ENCODE measurements at regions of chr5 and their contacts with region 1.

Region 1: DNA sequence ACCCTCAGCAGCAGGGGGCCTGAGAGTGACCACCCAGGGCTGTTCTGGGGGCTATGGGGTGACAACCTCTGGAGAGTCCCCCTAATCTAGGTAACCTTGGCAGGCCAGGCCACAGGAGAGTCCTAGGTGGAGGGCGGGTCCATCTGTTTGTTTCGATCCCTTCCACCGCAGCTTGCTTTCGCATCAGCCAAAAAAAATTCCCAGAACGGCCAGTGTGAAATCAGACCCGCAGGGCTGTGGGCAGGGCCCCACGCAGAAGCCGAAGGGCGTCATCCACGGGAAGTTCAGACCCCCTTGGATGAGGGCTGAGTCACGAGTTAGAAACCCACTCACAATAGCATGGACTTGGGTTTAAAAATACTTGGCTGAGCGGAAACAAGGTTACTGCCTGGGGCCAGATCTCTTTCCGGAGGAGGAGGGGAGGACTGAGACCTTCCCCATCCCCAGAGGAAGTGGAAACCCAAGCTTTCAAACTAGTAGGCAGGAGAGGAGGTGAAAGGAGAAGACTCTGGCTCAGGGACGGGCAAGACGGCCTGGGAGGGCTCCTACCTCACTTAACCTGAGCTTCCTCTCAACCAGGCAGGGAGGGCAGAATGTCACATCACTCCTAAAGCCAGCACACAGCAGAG is 8.5 kb downstream of the STK10 start:
- DNase-seq: peak in 8 of 9 experiments; percentile 36 to 86 (median 58)
- ATAC-seq: peak; percentile 9
- H3K4me3 ChIP-seq: peak overlapping the region; percentile 49 to 51
- H3K4me3 Mint-ChIP-seq: peak overlapping the region; percentile 80
- H3K27ac ChIP-seq: peak overlapping the region; percentile 92 to 97
- H3K27ac Mint-ChIP-seq: peak overlapping the region; percentile 97
- H3K4me1 ChIP-seq: peaks cover 90% of the 10 kb centered on the region
- H3K4me1 Mint-ChIP-seq: peaks cover 89% of the 10 kb centered on the region
- H3K27me3 ChIP-seq: no peaks in the 10 kb centered on the region
- H3K27me3 Mint-ChIP-seq: no peaks in the 10 kb centered on the region
- CTCF ChIP-seq: no peak

Region 2: GRCh38 chr5:172065501-172065990 is 113.9 kb before region 1 on chr5:
- CTCF ChIA-PET with region 1: interaction called, 4 read pairs
- POLR2A ChIA-PET with region 1: interaction called, 15 read pairs
- intact Hi-C with region 1: loop called in 1 of 2 experiments (anchors 2 kb)
- DNase-seq: no peak
- ATAC-seq: no peak
- H3K4me3 ChIP-seq: peak overlapping the region in 1 of 2 experiments; percentile 6
- H3K4me3 Mint-ChIP-seq: peak overlapping the region; percentile 15
- H3K27ac ChIP-seq: peak overlapping the region; percentile 34 to 67
- H3K27ac Mint-ChIP-seq: peak overlapping the region; percentile 98
- H3K4me1 ChIP-seq: peaks cover 57% of the 10 kb centered on the region
- H3K4me1 Mint-ChIP-seq: peaks cover 72% of the 10 kb centered on the region
- H3K27me3 ChIP-seq: no peaks in the 10 kb centered on the region
- H3K27me3 Mint-ChIP-seq: no peaks in the 10 kb centered on the region
- CTCF ChIP-seq: no peak

Region 3: DNA sequence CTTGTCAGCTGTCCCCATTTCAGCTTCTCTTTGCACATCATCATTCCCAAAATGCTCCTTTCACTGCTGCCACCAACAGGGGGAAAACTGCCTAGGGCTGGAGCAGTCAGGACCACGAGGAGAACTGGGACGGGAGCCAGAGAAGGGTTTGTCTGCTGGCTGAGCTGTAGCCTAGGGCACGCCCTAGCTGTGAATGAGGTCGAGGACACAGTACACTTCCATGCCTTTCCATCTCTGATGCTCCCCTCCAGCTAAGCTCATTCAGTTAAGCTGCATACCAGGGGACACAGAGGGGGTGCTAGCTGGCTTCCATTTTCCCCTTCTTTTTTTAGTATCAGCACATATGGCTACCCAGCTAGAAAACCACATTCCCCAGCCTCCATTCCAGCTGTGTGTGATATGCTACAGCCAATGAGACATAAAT is 56.2 kb before region 1 on chr5:
- CTCF ChIA-PET with region 1: interaction called, 3 read pairs
- POLR2A ChIA-PET with region 1: interaction called, 11 read pairs
- intact Hi-C with region 1: no loop called
- DNase-seq: no peak
- ATAC-seq: no peak
- H3K4me3 ChIP-seq: no peak overlapping the region
- H3K4me3 Mint-ChIP-seq: no peak overlapping the region
- H3K27ac ChIP-seq: peak overlapping the region in 1 of 2 experiments; percentile 45
- H3K27ac Mint-ChIP-seq: peak overlapping the region; percentile 88
- H3K4me1 ChIP-seq: peaks cover 19% of the 10 kb centered on the region
- H3K4me1 Mint-ChIP-seq: peaks cover 53% of the 10 kb centered on the region
- H3K27me3 ChIP-seq: no peaks in the 10 kb centered on the region
- H3K27me3 Mint-ChIP-seq: no peaks in the 10 kb centered on the region
- CTCF ChIP-seq: no peak

Region 4: DNA sequence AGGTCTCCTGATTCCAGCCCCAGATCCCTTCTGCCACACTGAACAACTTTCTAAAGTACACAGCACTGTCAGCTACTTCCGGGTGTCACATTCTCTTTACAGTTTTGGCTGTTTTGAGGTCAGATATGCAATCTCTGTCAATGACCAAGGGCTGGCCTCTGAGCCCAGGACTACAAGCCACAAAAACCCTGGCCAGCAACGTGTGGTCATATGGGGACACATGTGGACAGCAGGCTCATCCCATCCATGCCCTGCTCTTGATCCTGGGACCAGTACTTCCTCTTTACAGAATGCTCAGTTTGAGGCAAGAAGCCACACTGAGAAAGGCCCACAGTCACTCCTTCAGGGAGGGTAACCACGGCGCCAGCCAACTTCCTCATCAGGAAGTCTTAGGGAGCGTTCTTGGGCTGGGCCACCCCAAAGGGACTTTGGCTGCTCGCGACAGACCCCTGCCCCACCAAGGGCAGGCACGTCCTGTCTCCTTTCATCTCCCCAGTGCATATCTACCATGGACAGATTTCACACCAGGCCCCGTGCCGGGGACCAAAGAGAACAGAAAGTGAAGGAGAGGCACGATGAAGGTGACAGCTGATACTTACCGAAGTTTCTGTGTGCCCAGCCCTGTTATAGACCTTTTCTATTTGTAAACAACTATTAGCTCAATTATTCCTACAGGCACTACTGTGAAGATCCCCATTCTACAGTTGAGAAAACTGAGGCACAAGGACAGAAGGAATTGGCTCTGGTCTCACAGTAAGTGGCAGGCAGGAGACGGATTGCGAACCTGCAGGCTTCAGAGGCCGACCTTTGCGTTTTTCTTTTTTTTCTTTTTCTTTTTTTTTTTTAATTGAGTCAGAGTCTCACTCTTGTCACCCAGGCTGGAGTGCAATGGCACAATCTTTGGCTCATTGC is 28.7 kb before region 1 on chr5:
- CTCF ChIA-PET with region 1: interaction called, 16 read pairs
- POLR2A ChIA-PET with region 1: interaction called, 21 read pairs
- intact Hi-C with region 1: no loop called
- DNase-seq: peak in 6 of 9 experiments; percentile 7 to 61 (median 36)
- ATAC-seq: peak; percentile 58
- H3K4me3 ChIP-seq: peak overlapping the region; percentile 9 to 36
- H3K4me3 Mint-ChIP-seq: peak overlapping the region; percentile 48
- H3K27ac ChIP-seq: peak overlapping the region; percentile 40 to 82
- H3K27ac Mint-ChIP-seq: peak overlapping the region; percentile 86
- H3K4me1 ChIP-seq: peaks cover 71% of the 10 kb centered on the region
- H3K4me1 Mint-ChIP-seq: peaks cover 84% of the 10 kb centered on the region
- H3K27me3 ChIP-seq: no peaks in the 10 kb centered on the region
- H3K27me3 Mint-ChIP-seq: no peaks in the 10 kb centered on the region
- CTCF ChIP-seq: no peak

Region 5: GRCh38 chr5:172764849-172765765 is 585.6 kb after region 1 on chr5:
- CTCF ChIA-PET with region 1: no interaction called
- POLR2A ChIA-PET with region 1: no interaction called
- intact Hi-C with region 1: loop called in 1 of 2 experiments (anchors 5 kb)
- DNase-seq: peak; percentile 88 to 100 (median 96)
- ATAC-seq: peak; percentile 77
- H3K4me3 ChIP-seq: peak overlapping the region; percentile 41 to 48
- H3K4me3 Mint-ChIP-seq: peak overlapping the region; percentile 81
- H3K27ac ChIP-seq: peak overlapping the region; percentile 86 to 89
- H3K27ac Mint-ChIP-seq: peak overlapping the region; percentile 96
- H3K4me1 ChIP-seq: peaks cover 33% of the 10 kb centered on the region
- H3K4me1 Mint-ChIP-seq: peaks cover 52% of the 10 kb centered on the region
- H3K27me3 ChIP-seq: no peaks in the 10 kb centered on the region
- H3K27me3 Mint-ChIP-seq: no peaks in the 10 kb centered on the region
- CTCF ChIP-seq: no peak